ENCODE measurements at regions of chr10 and their contacts with region 1.

Region 1: DNA sequence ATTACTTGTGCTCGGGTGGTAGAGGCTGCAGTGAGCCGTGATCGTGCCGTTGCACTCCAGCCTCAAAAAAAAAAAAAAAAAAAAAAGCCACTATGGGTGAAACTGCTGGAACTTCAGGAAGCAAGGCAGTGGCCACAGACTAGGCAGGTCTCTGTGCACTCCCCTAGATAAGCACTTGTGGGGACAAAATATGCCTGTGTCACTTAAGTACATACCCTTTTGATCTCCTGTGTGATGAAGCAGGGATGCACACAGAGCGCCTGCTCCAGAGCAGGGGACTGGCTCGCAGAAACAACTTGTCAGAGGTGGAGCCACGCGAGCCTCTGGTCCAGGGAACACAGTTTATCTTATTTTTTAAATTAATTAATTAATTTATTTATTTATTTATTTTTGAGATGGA is 42.9 kb upstream of the PSAP start:
- DNase-seq: no peak
- H3K4me3 ChIP-seq: no peak overlapping the region
- H3K27ac ChIP-seq: no peak overlapping the region
- H3K4me1 ChIP-seq: peaks cover 5 to 15% of the 10 kb centered on the region in 2 donors
- H3K27me3 ChIP-seq: no peaks in the 10 kb centered on the region
- CTCF ChIP-seq: no peak
- POLR2A ChIP-seq: no peak

Region 2: DNA sequence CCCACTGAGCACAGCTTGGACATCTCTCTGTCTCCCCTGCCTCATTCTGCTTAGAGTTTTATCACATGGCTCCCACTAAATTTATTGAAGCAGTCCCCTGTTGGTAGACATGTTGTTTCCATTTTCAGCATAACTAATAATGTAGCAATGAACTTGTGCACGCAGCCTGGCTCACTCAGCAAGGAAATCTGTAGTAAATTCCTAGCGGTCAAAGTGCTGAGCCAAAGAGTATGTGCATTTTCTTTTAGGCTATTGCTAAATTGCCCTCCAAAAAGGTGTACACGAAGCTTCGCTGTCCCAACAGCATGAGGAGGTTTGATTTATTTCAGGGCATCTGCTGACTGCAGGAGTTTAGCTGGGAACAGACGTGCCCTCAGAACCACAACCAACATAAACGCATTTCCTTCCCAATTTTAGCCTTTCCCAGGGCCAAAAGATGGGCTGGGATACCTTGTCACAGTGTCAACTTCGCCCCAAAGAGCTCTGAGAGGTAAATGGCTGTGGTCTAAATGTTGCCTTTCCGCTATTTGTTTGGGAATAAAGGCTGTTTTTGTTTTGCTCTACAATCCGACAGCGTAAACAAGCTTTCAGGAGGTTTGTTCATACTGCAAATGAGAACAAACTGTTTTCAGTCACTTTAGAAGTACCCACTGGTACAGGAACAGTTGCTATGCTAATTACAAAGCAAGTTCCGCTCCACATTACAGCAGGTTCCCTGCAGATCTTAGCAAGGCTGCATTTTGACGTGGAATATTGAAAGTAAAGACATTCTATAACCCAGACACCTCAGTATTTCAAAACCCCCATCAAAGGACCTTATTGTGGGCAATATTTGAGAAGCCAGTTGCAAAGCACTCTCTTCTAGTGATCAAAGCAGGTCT is 137.4 kb before region 1 on chr10:
- intact Hi-C with region 1: no loop called
- DNase-seq: no peak
- H3K4me3 ChIP-seq: no peak overlapping the region
- H3K27ac ChIP-seq: no peak overlapping the region
- H3K4me1 ChIP-seq: peaks cover 11 to 19% of the 10 kb centered on the region in 2 donors
- H3K27me3 ChIP-seq: no peaks in the 10 kb centered on the region
- CTCF ChIP-seq: no peak
- POLR2A ChIP-seq: no peak

Region 3: DNA sequence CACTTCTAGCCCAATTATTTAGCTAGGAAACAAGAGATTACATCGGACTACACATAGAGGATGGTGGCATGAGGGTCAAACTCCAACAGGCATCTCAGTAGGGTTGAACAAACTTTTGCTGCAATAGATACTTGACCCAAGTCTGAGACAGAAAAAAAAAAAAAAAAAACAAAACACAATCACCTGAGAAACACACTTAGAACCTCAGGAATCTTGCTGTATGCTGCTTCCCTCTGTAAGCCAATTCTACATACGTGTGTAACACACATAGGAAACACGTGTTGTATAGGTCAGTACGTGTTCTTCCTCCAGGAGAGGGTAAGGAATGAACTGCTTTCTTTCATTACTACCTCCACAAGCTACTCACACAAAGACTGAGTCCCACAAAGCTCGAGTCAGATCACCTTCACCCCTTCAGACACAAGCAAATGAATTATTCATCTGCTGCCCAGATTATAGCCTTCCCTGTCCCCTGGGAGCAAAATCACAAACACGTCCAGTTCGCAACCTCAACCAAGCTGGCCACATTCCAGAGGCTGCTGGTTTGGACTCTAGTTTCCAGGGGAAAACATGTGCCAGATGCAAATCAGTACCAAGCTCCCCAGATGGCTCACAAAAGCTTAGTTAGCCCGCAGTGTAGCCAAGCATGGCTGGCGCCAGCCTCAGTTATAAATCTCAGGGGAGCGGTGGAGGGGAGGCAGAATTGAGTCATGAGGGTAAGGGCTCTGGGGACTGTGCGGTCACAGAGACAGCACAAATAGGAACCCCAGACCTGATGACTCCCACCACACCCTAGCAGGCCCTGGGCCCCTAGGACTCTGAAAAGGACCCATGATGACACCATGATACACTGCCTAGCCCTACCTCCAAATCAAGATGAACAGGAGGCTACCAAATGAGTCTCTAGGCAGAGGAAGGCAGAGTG is 58.0 kb before region 1 on chr10:
- intact Hi-C with region 1: loop called (anchors 10 kb)
- DNase-seq: peak; percentile 86 to 90
- H3K4me3 ChIP-seq: no peak overlapping the region
- H3K27ac ChIP-seq: peak overlapping the region; percentile 62 to 82 (median 72)
- H3K4me1 ChIP-seq: peaks cover 33 to 68% of the 10 kb centered on the region in 2 donors
- H3K27me3 ChIP-seq: no peaks in the 10 kb centered on the region
- CTCF ChIP-seq: no peak
- POLR2A ChIP-seq: no peak

Region 4: GRCh38 chr10:71933651-71934050 is 39.7 kb after region 1 on chr10:
- intact Hi-C with region 1: no loop called
- DNase-seq: no peak
- H3K4me3 ChIP-seq: no peak overlapping the region
- H3K27ac ChIP-seq: no peak overlapping the region
- H3K4me1 ChIP-seq: no peaks in the 10 kb centered on the region
- H3K27me3 ChIP-seq: no peaks in the 10 kb centered on the region
- CTCF ChIP-seq: no peak
- POLR2A ChIP-seq: no peak

Region 5: DNA sequence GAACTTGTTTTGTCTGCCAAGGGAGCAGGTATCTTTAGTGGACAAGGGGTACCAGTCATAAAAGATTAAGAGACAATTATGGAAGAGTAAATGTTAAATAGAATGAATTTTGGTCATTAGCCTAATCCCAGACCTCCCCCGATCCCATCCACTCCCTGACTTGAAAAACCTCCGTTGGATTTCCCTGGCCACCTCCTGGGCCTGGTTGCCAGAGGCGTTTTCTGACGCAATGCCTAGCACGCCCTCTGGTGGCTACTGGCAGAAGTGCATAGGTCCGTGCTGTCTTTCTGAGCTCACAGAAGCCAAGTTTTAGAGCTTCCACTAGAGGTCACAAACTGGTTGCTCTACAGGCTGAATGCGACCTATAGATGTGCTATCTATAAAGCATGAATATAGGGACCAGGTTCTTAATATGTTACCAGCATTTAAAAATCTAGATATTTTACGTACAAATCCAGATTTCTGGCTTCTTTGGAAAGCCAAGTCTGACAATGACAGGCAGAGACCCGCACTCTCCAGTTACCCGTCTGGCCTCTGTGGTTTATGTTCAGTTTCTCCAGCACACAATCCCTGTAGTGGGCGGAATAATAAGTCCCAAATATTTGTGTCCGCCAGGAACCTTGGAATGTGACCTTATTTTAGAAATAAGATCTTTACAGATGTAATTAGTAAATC is 154.7 kb after region 1 on chr10:
- intact Hi-C with region 1: loop called (anchors 10 kb)
- DNase-seq: peak; percentile 93 to 94
- H3K4me3 ChIP-seq: no peak overlapping the region
- H3K27ac ChIP-seq: no peak overlapping the region
- H3K4me1 ChIP-seq: peaks cover 0 to 10% of the 10 kb centered on the region in 2 donors
- H3K27me3 ChIP-seq: no peaks in the 10 kb centered on the region
- CTCF ChIP-seq: peak; percentile 95 to 100 (median 99)
- POLR2A ChIP-seq: no peak

Measured in thyroid gland (tissue), 4 donors.